ENCODE measurements at regions of chr18 and their contacts with region 1.

Region 1: DNA sequence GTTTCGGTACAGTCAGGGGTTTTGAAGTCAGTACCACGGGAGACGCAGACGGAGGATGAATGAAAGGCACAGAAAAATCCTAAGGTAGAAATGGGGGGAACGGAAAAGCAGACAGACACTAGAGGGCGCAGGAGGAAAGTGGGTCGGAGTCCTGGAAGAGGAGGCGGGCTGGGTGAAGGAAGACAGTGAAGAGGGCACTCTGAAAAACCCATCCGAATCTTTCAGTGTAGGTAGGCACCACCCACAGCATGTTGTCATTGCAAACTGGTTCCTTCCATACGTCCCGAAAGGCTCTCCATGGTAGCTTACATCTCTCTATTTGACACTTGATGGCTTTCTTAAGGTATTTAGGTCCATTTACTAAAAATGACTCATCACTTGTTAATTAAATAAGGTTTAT is 18.5 kb upstream of the ZNF236 start:
- DNase-seq: peak; percentile 50 to 73 (median 56)
- H3K4me3 ChIP-seq: no peak overlapping the region
- H3K4me3 Mint-ChIP-seq: peak overlapping the region in 5 of 7 donors; percentile 21 to 67 (median 61)
- H3K27ac ChIP-seq: no peak overlapping the region
- H3K27ac Mint-ChIP-seq: peak overlapping the region in 1 of 8 donors; percentile 4
- H3K4me1 ChIP-seq: peaks cover 5% of the 10 kb centered on the region
- H3K4me1 Mint-ChIP-seq: peaks cover 8 to 18% (median 10%) of the 10 kb centered on the region in 3 donors
- H3K27me3 ChIP-seq: no peaks in the 10 kb centered on the region
- H3K27me3 Mint-ChIP-seq: peaks cover 2 to 21% of the 10 kb centered on the region in 2 donors

Region 2: GRCh38 chr18:74967979-74968378 is 1835.8 kb before region 1 on chr18:
- CTCF ChIA-PET with region 1: no interaction called
- POLR2A ChIA-PET with region 1: interaction called, 13 read pairs
- DNase-seq: no peak
- H3K4me3 ChIP-seq: no peak overlapping the region
- H3K4me3 Mint-ChIP-seq: no peak overlapping the region
- H3K27ac ChIP-seq: no peak overlapping the region
- H3K27ac Mint-ChIP-seq: no peak overlapping the region
- H3K4me1 ChIP-seq: no peaks in the 10 kb centered on the region
- H3K4me1 Mint-ChIP-seq: peaks cover 9 to 19% (median 11%) of the 10 kb centered on the region in 3 donors
- H3K27me3 ChIP-seq: no peaks in the 10 kb centered on the region
- H3K27me3 Mint-ChIP-seq: no peaks in the 10 kb centered on the region

Region 3: DNA sequence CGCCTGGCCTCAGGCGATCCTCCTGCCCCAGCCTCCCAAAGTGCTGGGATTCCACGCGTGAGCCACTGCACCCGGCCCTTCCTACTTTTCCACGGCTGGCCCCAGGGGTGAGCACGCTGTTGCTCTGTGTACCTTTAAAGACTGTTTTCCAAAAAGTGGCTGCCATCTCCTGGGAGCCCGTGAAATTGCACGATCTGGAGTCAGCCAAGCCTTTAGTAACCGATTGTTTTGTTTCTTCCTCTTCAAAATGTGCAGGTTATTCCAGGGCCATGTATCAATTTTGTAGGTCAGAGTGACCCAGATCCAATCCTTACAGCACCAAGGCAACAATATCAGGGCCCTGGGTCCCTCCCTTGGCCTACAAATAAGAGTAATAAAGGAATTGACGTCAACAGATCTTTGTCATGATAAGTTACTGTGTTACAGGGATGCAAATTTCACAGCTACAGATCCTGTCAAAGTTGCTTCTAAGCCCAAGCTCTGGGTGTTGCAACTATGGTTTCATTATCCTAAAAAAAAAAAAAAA is 117.0 kb before region 1 on chr18:
- CTCF ChIA-PET with region 1: no interaction called
- POLR2A ChIA-PET with region 1: no interaction called
- DNase-seq: peak in 1 of 5 donors; percentile 13
- H3K4me3 ChIP-seq: no peak overlapping the region
- H3K4me3 Mint-ChIP-seq: peak overlapping the region in 2 of 7 donors; percentile 13 to 14
- H3K27ac ChIP-seq: no peak overlapping the region
- H3K27ac Mint-ChIP-seq: peak overlapping the region in 4 of 8 donors; percentile 38 to 78 (median 72)
- H3K4me1 ChIP-seq: no peaks in the 10 kb centered on the region
- H3K4me1 Mint-ChIP-seq: peaks cover 8 to 17% (median 13%) of the 10 kb centered on the region in 3 donors
- H3K27me3 ChIP-seq: no peaks in the 10 kb centered on the region
- H3K27me3 Mint-ChIP-seq: peaks cover 21 to 46% of the 10 kb centered on the region in 2 donors

Region 4: DNA sequence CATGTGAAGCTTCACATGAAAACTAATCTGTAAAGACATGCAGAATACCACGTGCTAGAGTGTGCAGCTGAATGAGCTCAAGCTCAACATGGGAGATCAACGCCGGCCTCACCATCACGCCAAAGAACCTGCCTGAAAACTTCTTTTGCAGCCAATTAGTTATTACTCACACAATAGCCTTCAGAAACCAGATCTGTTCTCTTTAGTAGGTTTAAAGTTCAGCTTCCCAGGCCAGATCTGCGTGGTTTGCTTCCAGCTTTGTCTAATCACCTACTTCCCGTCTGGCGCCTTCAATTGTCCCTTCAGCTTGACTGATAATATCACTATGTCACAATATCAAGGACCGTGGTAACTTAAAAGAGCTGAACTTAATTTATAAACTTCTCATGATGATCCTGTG is 49.5 kb before region 1 on chr18:
- CTCF ChIA-PET with region 1: no interaction called
- POLR2A ChIA-PET with region 1: no interaction called
- DNase-seq: no peak
- H3K4me3 ChIP-seq: no peak overlapping the region
- H3K4me3 Mint-ChIP-seq: no peak overlapping the region
- H3K27ac ChIP-seq: no peak overlapping the region
- H3K27ac Mint-ChIP-seq: no peak overlapping the region
- H3K4me1 ChIP-seq: no peaks in the 10 kb centered on the region
- H3K4me1 Mint-ChIP-seq: no peaks in the 10 kb centered on the region
- H3K27me3 ChIP-seq: no peaks in the 10 kb centered on the region
- H3K27me3 Mint-ChIP-seq: peaks cover 2 to 3% of the 10 kb centered on the region in 2 donors

Region 5: GRCh38 chr18:76791106-76791505 is 12.7 kb before region 1 on chr18:
- CTCF ChIA-PET with region 1: interaction called, 25 read pairs
- POLR2A ChIA-PET with region 1: no interaction called
- DNase-seq: no peak
- H3K4me3 ChIP-seq: no peak overlapping the region
- H3K4me3 Mint-ChIP-seq: no peak overlapping the region
- H3K27ac ChIP-seq: no peak overlapping the region
- H3K27ac Mint-ChIP-seq: no peak overlapping the region
- H3K4me1 ChIP-seq: no peaks in the 10 kb centered on the region
- H3K4me1 Mint-ChIP-seq: peaks cover 7 to 11% (median 7%) of the 10 kb centered on the region in 3 donors
- H3K27me3 ChIP-seq: no peaks in the 10 kb centered on the region
- H3K27me3 Mint-ChIP-seq: peaks cover 11 to 22% of the 10 kb centered on the region in 2 donors

Region 6: DNA sequence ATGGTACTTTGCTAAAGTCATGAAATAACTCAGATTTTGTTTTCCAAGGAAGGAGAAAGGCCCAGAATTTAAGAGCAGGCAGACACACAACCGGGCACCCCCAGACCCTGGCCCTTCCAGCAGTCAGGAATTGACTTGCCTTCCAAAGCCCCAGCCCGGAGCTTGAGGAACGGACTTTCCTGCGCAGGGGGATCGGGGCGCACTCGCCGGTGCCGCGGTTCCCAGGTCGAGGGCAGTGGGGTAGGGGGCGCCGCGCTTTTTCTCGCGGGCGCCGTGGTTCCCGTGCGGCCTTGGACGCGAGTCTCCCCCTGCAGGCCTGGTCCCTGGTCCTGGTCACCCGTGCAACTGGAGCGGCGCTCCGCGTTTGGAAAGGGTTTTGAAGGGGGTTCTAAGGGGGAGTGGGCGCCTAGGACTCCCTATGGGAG is 19.8 kb after region 1 on chr18:
- CTCF ChIA-PET with region 1: interaction called, 48 read pairs
- POLR2A ChIA-PET with region 1: interaction called, 3 read pairs
- DNase-seq: peak in 1 of 5 donors; percentile 49
- H3K4me3 ChIP-seq: peak overlapping the region; percentile 65
- H3K4me3 Mint-ChIP-seq: peak overlapping the region; percentile 73 to 91 (median 87)
- H3K27ac ChIP-seq: peak overlapping the region; percentile 38
- H3K27ac Mint-ChIP-seq: peak overlapping the region; percentile 79 to 93 (median 88)
- H3K4me1 ChIP-seq: peaks cover 27% of the 10 kb centered on the region
- H3K4me1 Mint-ChIP-seq: peaks cover 49 to 74% (median 56%) of the 10 kb centered on the region in 3 donors
- H3K27me3 ChIP-seq: no peaks in the 10 kb centered on the region
- H3K27me3 Mint-ChIP-seq: no peaks in the 10 kb centered on the region

Region 7: GRCh38 chr18:76875390-76876325 is 71.8 kb after region 1 on chr18:
- CTCF ChIA-PET with region 1: interaction called, 11 read pairs
- POLR2A ChIA-PET with region 1: no interaction called
- DNase-seq: peak in 4 of 5 donors; percentile 7 to 31 (median 12)
- H3K4me3 ChIP-seq: no peak overlapping the region
- H3K4me3 Mint-ChIP-seq: no peak overlapping the region
- H3K27ac ChIP-seq: no peak overlapping the region
- H3K27ac Mint-ChIP-seq: peak overlapping the region in 2 of 8 donors; percentile 30 to 32
- H3K4me1 ChIP-seq: no peaks in the 10 kb centered on the region
- H3K4me1 Mint-ChIP-seq: peaks cover 0 to 16% (median 11%) of the 10 kb centered on the region in 3 donors
- H3K27me3 ChIP-seq: no peaks in the 10 kb centered on the region
- H3K27me3 Mint-ChIP-seq: no peaks in the 10 kb centered on the region

Region 8: DNA sequence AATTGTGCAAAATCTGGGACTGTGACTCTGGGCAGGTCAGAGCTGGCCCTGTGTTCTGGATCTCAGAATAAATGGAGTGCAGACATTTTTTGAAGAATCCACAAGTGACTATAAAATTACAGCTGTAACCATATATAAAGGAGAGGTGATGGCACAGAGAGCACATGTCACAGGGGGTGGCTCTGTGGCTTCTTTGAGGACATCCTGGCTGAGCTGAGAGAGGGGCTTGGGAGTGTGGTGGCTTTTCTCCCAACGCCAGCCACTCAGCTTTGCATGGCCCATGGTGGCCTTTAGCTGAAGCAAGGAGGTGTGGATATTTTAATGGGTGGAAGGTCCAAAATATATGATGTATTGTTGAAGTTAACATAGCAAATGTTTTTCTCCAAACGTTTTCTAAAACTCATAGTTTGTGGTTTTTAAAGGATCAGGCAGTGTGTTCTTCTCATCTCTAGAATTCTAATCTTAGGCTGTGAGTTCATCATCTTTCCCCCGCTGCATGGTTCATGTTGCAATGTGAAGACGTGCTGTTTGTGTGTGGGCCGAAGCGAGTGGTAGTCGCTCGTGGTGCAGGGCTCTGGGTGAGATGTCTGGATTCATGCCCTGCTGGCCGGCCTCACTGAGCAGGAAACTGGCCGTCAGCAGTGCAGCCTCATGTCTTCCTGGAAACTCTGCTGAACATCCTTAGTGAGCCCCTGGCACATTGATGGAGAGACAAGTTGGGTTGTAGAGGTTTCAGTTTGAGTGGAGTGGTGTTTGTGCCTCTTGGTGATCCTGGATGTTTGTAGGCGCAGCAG is 128.4 kb after region 1 on chr18:
- CTCF ChIA-PET with region 1: no interaction called
- POLR2A ChIA-PET with region 1: no interaction called
- DNase-seq: no peak
- H3K4me3 ChIP-seq: no peak overlapping the region
- H3K4me3 Mint-ChIP-seq: no peak overlapping the region
- H3K27ac ChIP-seq: no peak overlapping the region
- H3K27ac Mint-ChIP-seq: peak overlapping the region in 2 of 8 donors; percentile 28 to 80
- H3K4me1 ChIP-seq: no peaks in the 10 kb centered on the region
- H3K4me1 Mint-ChIP-seq: no peaks in the 10 kb centered on the region
- H3K27me3 ChIP-seq: no peaks in the 10 kb centered on the region
- H3K27me3 Mint-ChIP-seq: no peaks in the 10 kb centered on the region

Region 9: DNA sequence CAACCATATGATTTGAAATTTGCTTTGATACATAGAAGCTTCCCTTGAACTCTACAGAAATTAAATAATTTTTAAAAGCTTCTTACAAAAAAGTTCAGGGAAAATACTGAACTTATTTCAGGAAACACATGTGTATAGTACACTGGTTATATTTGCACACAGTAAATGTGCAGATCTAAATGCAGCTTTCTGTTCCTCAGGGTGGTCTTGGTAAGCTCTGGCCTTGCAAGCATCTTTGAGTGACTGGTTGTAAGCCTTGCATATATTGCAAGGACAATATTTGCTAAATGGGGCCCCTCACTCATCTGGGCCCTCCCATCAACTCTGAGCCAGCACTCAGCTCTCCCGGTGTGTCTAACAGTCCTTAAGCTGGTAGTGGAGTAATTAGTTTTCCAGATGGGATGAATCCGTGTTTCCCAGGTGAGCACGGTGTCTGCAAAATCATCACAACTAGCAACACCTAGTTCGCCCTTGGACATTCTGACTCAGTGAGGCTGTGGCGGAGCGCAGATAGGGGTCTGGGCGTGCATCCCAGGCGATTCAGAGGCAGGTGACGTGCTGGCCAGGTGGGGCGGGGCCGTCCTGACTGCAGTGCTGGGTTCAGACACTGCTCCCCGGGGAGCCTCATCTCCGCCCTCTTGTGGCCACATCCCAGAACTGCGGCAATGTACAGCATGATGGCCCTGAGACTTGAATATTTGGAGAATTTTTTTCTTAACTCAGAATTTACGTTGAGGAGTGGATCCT is 179.2 kb after region 1 on chr18:
- CTCF ChIA-PET with region 1: interaction called, 58 read pairs
- POLR2A ChIA-PET with region 1: no interaction called
- DNase-seq: peak; percentile 70 to 87 (median 74)
- H3K4me3 ChIP-seq: no peak overlapping the region
- H3K4me3 Mint-ChIP-seq: peak overlapping the region in 2 of 7 donors; percentile 23 to 28
- H3K27ac ChIP-seq: no peak overlapping the region
- H3K27ac Mint-ChIP-seq: peak overlapping the region in 2 of 8 donors; percentile 42 to 74
- H3K4me1 ChIP-seq: no peaks in the 10 kb centered on the region
- H3K4me1 Mint-ChIP-seq: peaks cover 6 to 8% (median 8%) of the 10 kb centered on the region in 3 donors
- H3K27me3 ChIP-seq: no peaks in the 10 kb centered on the region
- H3K27me3 Mint-ChIP-seq: peaks cover 0 to 2% of the 10 kb centered on the region in 2 donors